Mammary epithelial cell (primary cell): ENCODE measurements at regions of chr13 and their contacts with region 1.

Region 1: GRCh38 chr13:49585220-49586157 is at the start of gene RCBTB1:
- DNase-seq: peak; percentile 74
- H3K4me3 ChIP-seq: peak within 1 kb of the TSS; percentile 71 to 82 (median 81)
- H3K27ac ChIP-seq: peak within 1 kb of the TSS; percentile 77
- H3K4me1 ChIP-seq: peaks cover 47% of the 10 kb centered on the region
- H3K27me3 ChIP-seq: no peaks in the 10 kb centered on the region
- CTCF ChIP-seq: no peak
- total RNA-seq, gene RCBTB1: 29.9 to 87.5 TPM

Region 2: GRCh38 chr13:49314344-49314882 is 271.1 kb before region 1 on chr13:
- CTCF ChIA-PET with region 1: no interaction called
- dilution Hi-C with region 1: no loop called
- in situ Hi-C with region 1: no loop called
- intact Hi-C with region 1: loop called (anchors 1 kb)
- DNase-seq: no peak
- H3K4me3 ChIP-seq: no peak overlapping the region
- H3K27ac ChIP-seq: peak overlapping the region; percentile 75
- H3K4me1 ChIP-seq: peaks cover 16% of the 10 kb centered on the region
- H3K27me3 ChIP-seq: no peaks in the 10 kb centered on the region
- CTCF ChIP-seq: no peak

Region 3: DNA sequence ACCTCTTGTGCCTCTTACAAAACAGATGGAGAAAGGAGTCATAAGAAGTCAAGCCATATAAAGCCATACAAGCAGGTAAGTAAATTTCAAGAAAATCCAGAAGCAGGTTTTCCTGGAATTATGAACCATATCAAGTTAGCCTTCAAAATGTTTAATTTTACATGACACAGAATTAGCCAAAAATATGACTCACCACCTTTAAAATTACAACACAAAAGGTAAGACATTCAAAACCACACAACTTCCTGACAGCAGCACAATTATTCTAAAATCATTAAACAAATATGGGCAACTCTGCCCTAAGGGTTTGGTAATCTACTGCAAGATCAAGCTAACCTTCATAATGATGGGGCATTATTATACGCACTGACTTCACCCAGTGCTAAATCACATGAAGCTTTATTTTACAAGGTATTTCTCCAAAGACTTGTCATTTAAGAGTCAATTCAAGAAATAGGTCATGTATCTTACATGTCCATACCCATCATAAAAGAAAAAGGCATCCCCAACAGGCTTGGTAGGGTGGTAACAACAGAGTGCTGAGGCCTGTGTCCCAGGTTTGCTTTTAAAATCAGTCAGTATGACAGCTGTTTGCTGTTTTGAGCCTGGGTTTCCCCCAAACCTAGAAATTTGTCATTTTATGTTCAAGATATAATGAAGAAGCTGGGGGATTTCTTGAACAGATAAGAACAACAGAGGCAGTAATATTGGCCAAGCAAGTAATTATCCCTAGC is 15.4 kb before region 1 on chr13:
- CTCF ChIA-PET with region 1: no interaction called
- dilution Hi-C with region 1: no loop called
- in situ Hi-C with region 1: no loop called
- intact Hi-C with region 1: loop called (anchors 2 kb)
- DNase-seq: peak; percentile 87
- H3K4me3 ChIP-seq: no peak overlapping the region
- H3K27ac ChIP-seq: peak overlapping the region; percentile 41
- H3K4me1 ChIP-seq: peaks cover 28% of the 10 kb centered on the region
- H3K27me3 ChIP-seq: no peaks in the 10 kb centered on the region
- CTCF ChIP-seq: no peak